GM12878 (cell line): ENCODE measurements at regions of chr14 and their contacts with region 1.

Region 1: GRCh38 chr14:50085570-50086320 is 30.6 kb downstream of the VCPKMT start:
- DNase-seq: peak; percentile 95
- ATAC-seq: peak; percentile 73
- H3K4me3 ChIP-seq: peak overlapping the region; percentile 38; the same call in 1 of the 2 replicates
- H3K27ac ChIP-seq: peak overlapping the region; percentile 95
- H3K4me1 ChIP-seq: peaks cover 68% of the 10 kb centered on the region
- H3K27me3 ChIP-seq: no peaks in the 10 kb centered on the region
- CTCF ChIP-seq: no peak
- EP300 ChIP-seq: peak; percentile 85 to 91
- POLR2A ChIP-seq: peak; percentile 48; the same call in 1 of the 2 replicates
- RAD21 ChIP-seq: no peak

Region 2: DNA sequence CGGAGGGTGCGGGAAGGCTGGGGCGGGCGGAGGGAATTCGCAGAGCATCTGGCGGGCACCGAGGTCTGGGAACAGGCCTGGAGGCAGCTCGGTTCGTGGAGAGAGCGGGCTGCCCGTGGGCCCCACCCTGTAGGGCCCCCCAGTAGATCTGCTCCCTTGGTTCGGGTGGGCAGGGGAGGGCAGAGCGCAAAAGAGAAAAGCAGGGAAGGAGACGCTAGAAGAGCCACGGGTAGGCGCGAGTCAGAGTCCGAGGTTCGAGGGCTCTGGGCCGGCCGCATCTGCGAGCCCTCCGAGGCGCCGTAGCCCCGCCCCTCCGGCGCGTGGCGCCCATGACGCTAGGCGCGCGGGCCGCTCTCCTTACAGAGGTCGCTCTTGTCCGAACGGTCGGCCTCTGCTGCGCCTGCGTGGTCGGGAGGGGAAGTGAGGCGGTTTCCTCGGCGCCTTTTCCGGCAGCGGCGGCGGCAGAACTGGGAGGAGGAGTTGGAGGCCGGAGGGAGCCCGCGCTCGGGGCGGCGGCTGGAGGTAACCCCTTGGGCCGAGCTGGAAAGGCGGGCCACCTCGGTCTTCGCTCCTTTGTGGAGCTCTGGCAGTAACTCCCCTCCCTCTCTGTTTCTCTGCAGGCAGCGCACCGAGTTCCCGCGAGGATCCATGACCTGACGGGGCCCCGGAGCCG is 193.0 kb before region 1 on chr14 and contains the start of gene ARF6:
- CTCF ChIA-PET with region 1: interaction called, 3 read pairs
- POLR2A ChIA-PET with region 1: interaction called, 4 read pairs
- RAD21 ChIA-PET with region 1: interaction called, 3 read pairs
- SMC1A ChIA-PET with region 1: interaction called, 4 read pairs
- in situ Hi-C with region 1: no loop called
- intact Hi-C with region 1: loop called (anchors 2 kb)
- DNase-seq: peak; percentile 81
- ATAC-seq: peak; percentile 83
- H3K4me3 ChIP-seq: peak within 1 kb of the TSS; percentile 97
- H3K27ac ChIP-seq: peak within 1 kb of the TSS; percentile 100
- H3K4me1 ChIP-seq: peaks cover 5% of the 10 kb centered on the region
- H3K27me3 ChIP-seq: no peaks in the 10 kb centered on the region
- CTCF ChIP-seq: peak in 2 of 3 experiments; percentile 15 to 29; a peak in 1 of 6 replicates
- EP300 ChIP-seq: no peak
- POLR2A ChIP-seq: peak; percentile 92
- RAD21 ChIP-seq: 0 out of 2 replicates have a peak, but pooled peaks have one; percentile 10
- polyA plus RNA-seq, gene ARF6: 46.8 to 86.6 TPM

Region 3: GRCh38 chr14:50045039-50045711 is 40.6 kb before region 1 on chr14:
- CTCF ChIA-PET with region 1: interaction called, 20 read pairs
- POLR2A ChIA-PET with region 1: interaction called, 7 read pairs
- RAD21 ChIA-PET with region 1: interaction called, 73 read pairs
- SMC1A ChIA-PET with region 1: interaction called, 25 read pairs
- in situ Hi-C with region 1: no loop called
- intact Hi-C with region 1: no loop called
- DNase-seq: peak; percentile 54
- ATAC-seq: peak; percentile 90
- H3K4me3 ChIP-seq: no peak overlapping the region
- H3K27ac ChIP-seq: peak overlapping the region; percentile 50
- H3K4me1 ChIP-seq: peaks cover 42% of the 10 kb centered on the region
- H3K27me3 ChIP-seq: no peaks in the 10 kb centered on the region
- CTCF ChIP-seq: no peak
- EP300 ChIP-seq: no peak
- POLR2A ChIP-seq: peak; percentile 55; the same call in 1 of the 2 replicates
- RAD21 ChIP-seq: peak; percentile 9; the same call in 1 of the 2 replicates

Region 4: GRCh38 chr14:50067723-50068495 is 17.8 kb before region 1 on chr14:
- CTCF ChIA-PET with region 1: interaction called, 41 read pairs
- POLR2A ChIA-PET with region 1: interaction called, 42 read pairs
- RAD21 ChIA-PET with region 1: interaction called, 99 read pairs
- SMC1A ChIA-PET with region 1: interaction called, 74 read pairs
- in situ Hi-C with region 1: no loop called
- intact Hi-C with region 1: loop called (anchors 1 kb)
- DNase-seq: no peak
- ATAC-seq: no peak
- H3K4me3 ChIP-seq: no peak overlapping the region
- H3K27ac ChIP-seq: no peak overlapping the region
- H3K4me1 ChIP-seq: peaks cover 41% of the 10 kb centered on the region
- H3K27me3 ChIP-seq: no peaks in the 10 kb centered on the region
- CTCF ChIP-seq: no peak
- EP300 ChIP-seq: no peak
- POLR2A ChIP-seq: no peak
- RAD21 ChIP-seq: no peak

Region 5: DNA sequence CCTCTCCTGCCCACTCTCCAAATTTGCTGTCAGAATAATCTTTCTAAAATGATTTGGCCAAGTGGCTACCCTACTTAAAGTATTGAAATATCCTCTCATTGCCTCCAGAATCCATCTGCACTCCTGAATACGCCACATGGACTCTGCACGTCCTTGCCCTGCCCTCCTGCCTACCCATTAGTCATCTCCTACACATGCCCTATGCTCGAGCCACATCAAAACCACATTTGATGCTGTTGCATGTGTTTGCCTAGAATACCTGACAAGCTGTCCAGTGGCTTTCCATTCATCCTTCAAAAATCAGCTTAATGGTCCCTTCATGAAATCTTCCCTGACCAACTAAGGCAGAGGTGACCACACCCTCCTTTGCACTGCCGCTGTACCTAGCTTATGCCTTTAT is 13.6 kb after region 1 on chr14:
- CTCF ChIA-PET with region 1: interaction called, 16 read pairs
- POLR2A ChIA-PET with region 1: interaction called, 6 read pairs
- RAD21 ChIA-PET with region 1: interaction called, 12 read pairs
- SMC1A ChIA-PET with region 1: interaction called, 60 read pairs
- in situ Hi-C with region 1: no loop called
- intact Hi-C with region 1: loop called (anchors 2 kb)
- DNase-seq: no peak
- ATAC-seq: no peak
- H3K4me3 ChIP-seq: no peak overlapping the region
- H3K27ac ChIP-seq: no peak overlapping the region
- H3K4me1 ChIP-seq: peaks cover 12% of the 10 kb centered on the region
- H3K27me3 ChIP-seq: no peaks in the 10 kb centered on the region
- CTCF ChIP-seq: no peak
- EP300 ChIP-seq: no peak
- POLR2A ChIP-seq: no peak
- RAD21 ChIP-seq: no peak

Region 6: DNA sequence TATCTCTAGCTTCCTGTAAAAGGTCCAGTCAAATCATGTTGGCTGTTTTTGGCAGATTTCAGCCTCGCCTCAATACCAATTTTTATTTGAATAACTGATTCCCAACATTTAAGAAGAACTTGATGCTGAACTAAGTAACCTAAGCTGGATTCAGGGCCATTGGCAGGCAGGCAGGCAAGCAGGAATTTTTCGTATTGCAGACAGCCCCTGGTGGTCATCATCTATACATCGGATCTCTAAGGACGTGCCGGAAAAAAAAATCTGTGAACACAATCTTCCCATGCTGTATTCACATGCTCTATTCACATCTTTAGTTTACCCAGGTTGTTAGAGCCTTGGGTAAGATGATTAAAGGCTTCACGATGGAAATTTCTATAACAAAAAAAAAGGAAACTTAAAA is 23.6 kb after region 1 on chr14:
- CTCF ChIA-PET with region 1: interaction called, 9 read pairs
- POLR2A ChIA-PET with region 1: interaction called, 6 read pairs
- RAD21 ChIA-PET with region 1: interaction called, 12 read pairs
- SMC1A ChIA-PET with region 1: interaction called, 60 read pairs
- in situ Hi-C with region 1: no loop called
- intact Hi-C with region 1: loop called (anchors 2 kb)
- DNase-seq: no peak
- ATAC-seq: no peak
- H3K4me3 ChIP-seq: no peak overlapping the region
- H3K27ac ChIP-seq: no peak overlapping the region
- H3K4me1 ChIP-seq: peaks cover 18% of the 10 kb centered on the region
- H3K27me3 ChIP-seq: no peaks in the 10 kb centered on the region
- CTCF ChIP-seq: no peak
- EP300 ChIP-seq: no peak
- POLR2A ChIP-seq: no peak
- RAD21 ChIP-seq: no peak